Activated CD8-positive, alpha-beta T cell treated with anti-CD3 and anti-CD28 coated beads, Interleukin-2, amount 10 ng/mL, durations not matched to agents 7 days and 5 days (primary cell): ENCODE measurements at regions of chr21 and their contacts with region 1.

Region 1: DNA sequence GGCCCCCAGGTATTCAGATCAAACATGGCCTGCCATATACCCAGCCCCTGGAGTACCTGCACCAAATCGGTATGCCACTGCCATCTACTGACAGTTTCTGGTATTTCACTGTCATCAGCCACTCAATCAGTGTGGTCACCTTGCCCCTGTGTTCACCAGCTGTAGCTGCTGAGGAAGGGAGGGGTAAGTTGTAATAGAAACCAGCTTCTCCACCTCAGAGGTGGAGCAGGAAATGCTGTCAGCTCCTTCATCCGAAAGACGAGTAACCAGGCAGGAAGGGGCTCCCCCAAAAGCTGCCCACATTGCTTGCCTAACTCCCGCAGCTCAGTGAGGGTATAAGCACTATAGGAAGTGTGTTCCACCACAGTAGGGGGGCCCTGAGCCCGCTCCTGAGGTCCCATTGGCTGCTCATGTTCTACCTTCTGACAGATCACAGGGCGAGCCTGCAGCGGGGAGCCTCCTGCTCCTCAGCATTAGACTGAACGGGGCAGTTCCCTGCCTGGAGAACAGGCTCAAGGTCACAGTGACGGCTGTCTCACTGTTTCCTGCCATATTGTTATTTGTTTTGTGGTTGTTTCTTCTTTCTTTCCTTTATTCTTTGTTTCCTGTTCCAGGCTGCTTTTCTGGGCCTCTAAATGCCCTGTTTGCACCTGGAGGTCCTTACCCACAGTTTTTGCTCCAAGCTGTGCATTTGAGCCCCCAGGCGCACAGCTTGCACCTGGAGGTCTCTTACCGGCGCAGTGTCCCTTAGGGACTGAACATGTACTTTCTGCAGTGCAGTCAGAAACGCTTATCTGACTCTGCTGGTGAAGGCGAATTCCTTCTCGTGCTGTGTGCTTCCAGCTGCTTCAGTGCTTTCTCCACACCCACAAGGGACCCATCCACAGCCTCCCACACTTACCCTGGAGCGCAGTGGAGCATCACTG is 1638.3 kb downstream of the MRPL39 start:
- DNase-seq: peak; percentile 96
- ATAC-seq: peak; percentile 95
- H3K4me3 Mint-ChIP-seq: peak overlapping the region; percentile 66
- H3K27ac Mint-ChIP-seq: peak overlapping the region; percentile 95
- H3K4me1 Mint-ChIP-seq: peaks cover 33% of the 10 kb centered on the region
- H3K27me3 Mint-ChIP-seq: peaks cover 7% of the 10 kb centered on the region

Region 2: GRCh38 chr21:23853796-23854379 is 115.1 kb before region 1 on chr21:
- CTCF ChIA-PET with region 1: interaction called, 56 read pairs
- POLR2A ChIA-PET with region 1: no interaction called
- DNase-seq: peak; percentile 52
- ATAC-seq: peak; percentile 88
- H3K4me3 Mint-ChIP-seq: no peak overlapping the region
- H3K27ac Mint-ChIP-seq: no peak overlapping the region
- H3K4me1 Mint-ChIP-seq: peaks cover 31% of the 10 kb centered on the region
- H3K27me3 Mint-ChIP-seq: peaks cover 15% of the 10 kb centered on the region

Region 3: DNA sequence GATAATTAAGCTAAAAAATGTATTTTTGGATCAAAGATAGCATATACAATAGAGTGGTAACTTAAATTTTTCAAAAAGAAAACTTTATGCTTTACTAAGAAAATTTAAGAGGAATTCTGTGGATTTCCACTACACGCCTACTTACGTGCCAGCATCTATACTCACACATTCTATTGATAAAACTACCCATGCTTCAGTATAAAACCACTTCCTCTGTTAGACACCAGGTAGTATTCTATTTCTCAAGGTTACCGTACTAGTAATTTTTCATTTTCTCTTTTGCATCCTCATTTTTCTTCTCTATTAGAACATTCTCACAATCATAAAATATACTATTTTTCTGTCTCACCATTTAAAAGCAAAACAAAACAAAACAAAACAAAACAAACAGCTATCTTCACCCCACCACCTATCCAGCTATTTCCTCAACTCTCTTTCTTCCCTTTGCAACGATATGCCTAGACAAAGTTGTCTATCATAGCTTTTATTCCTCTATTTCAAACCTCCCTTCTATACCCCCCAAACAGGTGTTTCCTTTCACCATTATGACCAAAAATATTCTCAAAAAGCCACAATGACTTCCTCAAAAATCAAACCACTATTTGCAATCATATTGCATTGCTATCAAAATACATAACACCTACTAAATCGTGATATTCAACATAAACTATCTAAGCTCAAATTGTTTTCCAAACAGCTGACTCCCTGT is 13.7 kb before region 1 on chr21:
- CTCF ChIA-PET with region 1: interaction called, 18 read pairs
- POLR2A ChIA-PET with region 1: no interaction called
- DNase-seq: no peak
- ATAC-seq: peak; percentile 51
- H3K4me3 Mint-ChIP-seq: peak overlapping the region; percentile 47
- H3K27ac Mint-ChIP-seq: peak overlapping the region; percentile 73
- H3K4me1 Mint-ChIP-seq: peaks cover 34% of the 10 kb centered on the region
- H3K27me3 Mint-ChIP-seq: no peaks in the 10 kb centered on the region

Region 4: GRCh38 chr21:24127651-24128050 is 158.7 kb after region 1 on chr21:
- CTCF ChIA-PET with region 1: no interaction called
- POLR2A ChIA-PET with region 1: no interaction called
- DNase-seq: no peak
- ATAC-seq: no peak
- H3K4me3 Mint-ChIP-seq: no peak overlapping the region
- H3K27ac Mint-ChIP-seq: no peak overlapping the region
- H3K4me1 Mint-ChIP-seq: no peaks in the 10 kb centered on the region
- H3K27me3 Mint-ChIP-seq: no peaks in the 10 kb centered on the region